ENCODE measurements at regions of chr12 and their contacts with region 1.

Region 1: DNA sequence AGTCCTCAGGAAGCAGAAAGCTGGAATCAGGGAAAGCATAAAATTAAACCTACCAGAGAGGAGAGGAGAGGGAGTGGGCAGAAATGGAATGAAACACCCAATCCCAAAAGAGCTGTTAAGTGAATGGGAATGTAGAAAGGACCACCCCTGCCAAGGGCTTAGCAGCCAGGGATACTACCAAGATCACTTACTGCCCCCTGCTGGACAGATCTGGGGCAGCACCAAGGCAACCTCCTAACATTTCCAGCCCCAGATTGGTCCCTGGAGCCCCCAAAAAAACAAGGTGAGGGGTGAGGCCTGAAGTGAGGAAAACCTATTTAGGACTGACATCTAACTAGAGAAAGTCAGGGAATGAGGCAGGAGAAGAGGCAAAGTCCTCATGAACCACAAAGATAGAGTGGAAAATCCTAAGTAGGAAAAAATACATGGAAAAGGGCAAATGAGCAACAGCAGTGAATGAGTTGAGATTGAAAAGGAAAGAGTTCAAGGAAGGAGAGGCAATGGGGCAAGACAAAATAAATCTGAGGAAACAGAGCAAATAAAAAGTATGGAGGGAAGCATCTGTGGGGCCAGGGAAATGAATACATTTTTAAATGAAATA is 11.2 kb upstream of the FKBP11 start:
- DNase-seq: peak; percentile 74 to 82 (median 78)
- H3K4me3 ChIP-seq: no peak overlapping the region
- H3K4me3 Mint-ChIP-seq: no peak overlapping the region
- H3K27ac ChIP-seq: peak overlapping the region; percentile 71
- H3K27ac Mint-ChIP-seq: peak overlapping the region; percentile 86 to 97 (median 95)
- H3K4me1 ChIP-seq: peaks cover 45% of the 10 kb centered on the region
- H3K4me1 Mint-ChIP-seq: peaks cover 31 to 50% (median 38%) of the 10 kb centered on the region in 4 donors
- H3K27me3 ChIP-seq: no peaks in the 10 kb centered on the region
- H3K27me3 Mint-ChIP-seq: no peaks in the 10 kb centered on the region

Region 2: DNA sequence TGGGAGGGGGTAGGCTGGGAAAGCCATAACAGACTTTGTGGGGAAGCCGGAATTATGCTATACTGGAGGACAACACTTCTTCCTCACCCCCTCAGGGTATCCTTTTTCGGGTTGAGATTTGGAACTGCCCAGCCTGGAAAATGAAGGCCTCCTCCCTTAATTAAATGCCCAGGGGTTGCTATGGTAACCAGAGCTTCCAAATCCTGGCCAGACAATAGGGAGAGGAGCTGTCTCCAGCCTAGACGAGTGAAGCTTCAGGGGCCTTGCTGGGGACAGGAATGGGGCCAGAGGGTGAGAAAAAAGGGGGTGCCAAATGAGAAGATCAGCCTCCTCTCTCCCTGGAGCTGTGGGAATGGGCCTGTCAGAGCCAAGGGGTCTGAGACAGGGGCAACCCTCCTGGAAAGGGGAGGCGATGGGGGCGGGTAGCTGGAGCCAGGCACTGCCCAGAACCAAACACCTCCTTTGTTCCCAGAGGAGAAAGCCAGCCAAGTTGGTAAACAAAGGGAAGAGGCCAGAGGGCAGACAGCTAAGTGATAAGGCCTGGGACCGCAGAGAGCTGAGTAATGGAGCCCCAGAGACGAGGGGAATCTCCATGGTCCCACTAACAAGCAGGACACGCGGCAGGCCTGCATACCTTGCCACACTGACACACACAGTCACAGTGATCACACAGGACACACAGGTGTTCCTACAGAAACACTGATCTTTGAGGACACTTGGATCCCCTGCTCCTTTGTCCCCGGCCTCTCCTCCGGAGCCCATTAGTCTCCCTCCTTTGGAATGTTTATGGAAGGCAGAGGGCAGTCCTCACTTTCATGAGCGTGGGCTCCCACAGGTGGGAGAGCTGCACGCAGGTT is 52.9 kb before region 1 on chr12:
- CTCF ChIA-PET with region 1: no interaction called
- POLR2A ChIA-PET with region 1: no interaction called
- intact Hi-C with region 1: no loop called
- DNase-seq: no peak
- H3K4me3 ChIP-seq: no peak overlapping the region
- H3K4me3 Mint-ChIP-seq: peak overlapping the region in 1 of 8 donors; percentile 27
- H3K27ac ChIP-seq: no peak overlapping the region
- H3K27ac Mint-ChIP-seq: no peak overlapping the region
- H3K4me1 ChIP-seq: no peaks in the 10 kb centered on the region
- H3K4me1 Mint-ChIP-seq: no peaks in the 10 kb centered on the region
- H3K27me3 ChIP-seq: no peaks in the 10 kb centered on the region
- H3K27me3 Mint-ChIP-seq: peaks cover 15 to 20% of the 10 kb centered on the region in 2 donors

Region 3: DNA sequence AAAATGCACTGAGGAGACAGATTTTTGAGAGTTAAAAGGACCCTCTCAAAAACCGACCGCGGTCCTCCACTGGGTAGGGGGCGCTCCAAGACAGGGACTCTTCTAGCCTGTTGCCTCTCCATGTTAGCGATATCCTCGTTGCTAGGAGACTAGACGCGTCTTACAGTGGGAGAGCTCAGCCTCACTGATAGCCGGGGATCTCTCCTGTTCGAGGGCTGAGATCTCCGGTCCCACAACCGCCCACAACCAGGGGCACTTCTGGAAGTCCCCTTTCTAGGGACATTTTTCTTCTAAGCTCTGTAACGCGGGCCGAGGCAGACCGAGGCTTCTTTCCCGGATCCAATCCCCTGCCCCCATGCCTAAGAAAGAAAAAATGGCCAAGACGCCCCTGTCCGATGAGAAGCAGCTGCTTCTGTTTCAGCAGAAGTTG is 32.5 kb before region 1 on chr12:
- CTCF ChIA-PET with region 1: interaction called, 153 read pairs
- POLR2A ChIA-PET with region 1: interaction called, 35 read pairs
- intact Hi-C with region 1: loop called (anchors 1 kb)
- DNase-seq: peak; percentile 81 to 89 (median 82)
- H3K4me3 ChIP-seq: peak overlapping the region in 1 of 2 donors; percentile 36
- H3K4me3 Mint-ChIP-seq: peak overlapping the region; percentile 68 to 86 (median 82)
- H3K27ac ChIP-seq: no peak overlapping the region
- H3K27ac Mint-ChIP-seq: peak overlapping the region in 6 of 7 donors; percentile 76 to 92 (median 89)
- H3K4me1 ChIP-seq: peaks cover 6% of the 10 kb centered on the region
- H3K4me1 Mint-ChIP-seq: peaks cover 2 to 13% (median 7%) of the 10 kb centered on the region in 4 donors
- H3K27me3 ChIP-seq: no peaks in the 10 kb centered on the region
- H3K27me3 Mint-ChIP-seq: peaks cover 0 to 4% of the 10 kb centered on the region in 2 donors

Region 4: DNA sequence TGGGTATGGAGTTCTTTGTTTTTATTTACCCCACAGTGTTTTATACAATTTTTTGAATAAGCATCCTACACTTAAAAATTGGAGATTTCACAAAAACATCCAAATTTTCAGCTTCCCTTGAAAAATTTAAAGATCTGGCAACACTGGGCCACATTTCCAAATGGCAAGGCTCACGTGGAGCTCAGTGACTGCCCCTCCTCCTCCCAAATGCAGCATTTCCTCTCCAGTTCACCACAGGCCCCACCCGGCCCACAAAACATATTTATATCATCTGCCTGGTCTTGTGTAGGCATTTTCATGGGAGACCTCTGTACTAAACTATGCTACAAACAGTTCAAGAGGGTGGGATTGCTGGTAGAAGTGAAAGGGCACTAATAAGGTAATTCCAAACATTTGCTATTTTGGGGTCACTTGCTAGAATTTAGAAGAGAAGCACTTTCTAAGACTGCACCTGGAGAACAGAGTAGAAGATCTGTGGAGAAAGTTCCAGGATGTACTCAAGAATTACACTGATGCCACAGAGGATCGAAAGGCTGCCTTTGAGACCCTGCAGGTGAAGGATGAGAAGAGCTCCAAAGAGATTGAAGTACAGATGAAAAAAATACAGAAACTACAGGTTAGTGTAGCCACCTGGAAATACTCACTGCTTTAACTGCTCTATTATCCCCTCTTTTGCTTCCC is 18.5 kb before region 1 on chr12:
- CTCF ChIA-PET with region 1: interaction called, 190 read pairs
- POLR2A ChIA-PET with region 1: interaction called, 20 read pairs
- intact Hi-C with region 1: loop called (anchors 2 kb)
- DNase-seq: peak; percentile 55 to 66 (median 61)
- H3K4me3 ChIP-seq: peak overlapping the region; percentile 44 to 72
- H3K4me3 Mint-ChIP-seq: peak overlapping the region; percentile 91 to 99 (median 94)
- H3K27ac ChIP-seq: peak overlapping the region; percentile 65
- H3K27ac Mint-ChIP-seq: peak overlapping the region; percentile 72 to 97 (median 94)
- H3K4me1 ChIP-seq: peaks cover 50% of the 10 kb centered on the region
- H3K4me1 Mint-ChIP-seq: peaks cover 27 to 54% (median 39%) of the 10 kb centered on the region in 4 donors
- H3K27me3 ChIP-seq: no peaks in the 10 kb centered on the region
- H3K27me3 Mint-ChIP-seq: no peaks in the 10 kb centered on the region

Region 5: GRCh38 chr12:48957141-48958048 is 20.9 kb after region 1 on chr12 and contains the start of gene ARF3:
- CTCF ChIA-PET with region 1: interaction called, 7 read pairs
- POLR2A ChIA-PET with region 1: interaction called, 10 read pairs
- intact Hi-C with region 1: loop called (anchors 2 kb)
- DNase-seq: peak; percentile 91 to 93 (median 93)
- H3K4me3 ChIP-seq: peak within 1 kb of the TSS; percentile 45 to 71
- H3K4me3 Mint-ChIP-seq: peak within 1 kb of the TSS; percentile 92 to 98 (median 96)
- H3K27ac ChIP-seq: peak within 1 kb of the TSS; percentile 73
- H3K27ac Mint-ChIP-seq: peak within 1 kb of the TSS; percentile 91 to 97 (median 95)
- H3K4me1 ChIP-seq: peaks cover 34% of the 10 kb centered on the region
- H3K4me1 Mint-ChIP-seq: peaks cover 27 to 54% (median 38%) of the 10 kb centered on the region in 4 donors
- H3K27me3 ChIP-seq: no peaks in the 10 kb centered on the region
- H3K27me3 Mint-ChIP-seq: peaks cover 1 to 2% of the 10 kb centered on the region in 2 donors
- total RNA-seq, gene ARF3: 69.8 to 77.5 TPM